CD14-positive monocyte (primary cell): ENCODE measurements at regions of chr17 and their contacts with region 1.

Region 1: GRCh38 chr17:27293898-27294688 is at the start of gene WSB1:
- DNase-seq: peak; percentile 92 to 95 (median 92)
- H3K4me3 ChIP-seq: peak within 1 kb of the TSS; percentile 68 to 98 (median 95)
- H3K4me3 Mint-ChIP-seq: peak within 1 kb of the TSS; percentile 99 to 100
- H3K27ac ChIP-seq: peak within 1 kb of the TSS; percentile 98 to 99
- H3K27ac Mint-ChIP-seq: peak within 1 kb of the TSS; percentile 98 to 100 (median 100)
- H3K4me1 ChIP-seq: peaks cover 44 to 49% of the 10 kb centered on the region in 2 donors
- H3K4me1 Mint-ChIP-seq: peaks cover 38% of the 10 kb centered on the region
- H3K27me3 ChIP-seq: no peaks in the 10 kb centered on the region
- H3K27me3 Mint-ChIP-seq: peaks cover 0 to 2% (median 0%) of the 10 kb centered on the region in 3 donors
- CTCF ChIP-seq: no peak
- polyA plus RNA-seq, gene WSB1: 220 to 368 (median 296) TPM

Region 2: GRCh38 chr17:27282054-27282551 is 12.0 kb before region 1 on chr17:
- intact Hi-C with region 1: loop called in 1 of 2 experiments (anchors 2 kb)
- DNase-seq: peak; percentile 58 to 88 (median 84)
- H3K4me3 ChIP-seq: peak overlapping the region in 1 of 3 experiments; percentile 63
- H3K4me3 Mint-ChIP-seq: peak overlapping the region; percentile 66 to 68
- H3K27ac ChIP-seq: peak overlapping the region; percentile 76 to 87
- H3K27ac Mint-ChIP-seq: peak overlapping the region; percentile 94 to 99 (median 98)
- H3K4me1 ChIP-seq: peaks cover 76 to 80% of the 10 kb centered on the region in 2 donors
- H3K4me1 Mint-ChIP-seq: peaks cover 72% of the 10 kb centered on the region
- H3K27me3 ChIP-seq: no peaks in the 10 kb centered on the region
- H3K27me3 Mint-ChIP-seq: no peaks in the 10 kb centered on the region
- CTCF ChIP-seq: no peak

Region 3: DNA sequence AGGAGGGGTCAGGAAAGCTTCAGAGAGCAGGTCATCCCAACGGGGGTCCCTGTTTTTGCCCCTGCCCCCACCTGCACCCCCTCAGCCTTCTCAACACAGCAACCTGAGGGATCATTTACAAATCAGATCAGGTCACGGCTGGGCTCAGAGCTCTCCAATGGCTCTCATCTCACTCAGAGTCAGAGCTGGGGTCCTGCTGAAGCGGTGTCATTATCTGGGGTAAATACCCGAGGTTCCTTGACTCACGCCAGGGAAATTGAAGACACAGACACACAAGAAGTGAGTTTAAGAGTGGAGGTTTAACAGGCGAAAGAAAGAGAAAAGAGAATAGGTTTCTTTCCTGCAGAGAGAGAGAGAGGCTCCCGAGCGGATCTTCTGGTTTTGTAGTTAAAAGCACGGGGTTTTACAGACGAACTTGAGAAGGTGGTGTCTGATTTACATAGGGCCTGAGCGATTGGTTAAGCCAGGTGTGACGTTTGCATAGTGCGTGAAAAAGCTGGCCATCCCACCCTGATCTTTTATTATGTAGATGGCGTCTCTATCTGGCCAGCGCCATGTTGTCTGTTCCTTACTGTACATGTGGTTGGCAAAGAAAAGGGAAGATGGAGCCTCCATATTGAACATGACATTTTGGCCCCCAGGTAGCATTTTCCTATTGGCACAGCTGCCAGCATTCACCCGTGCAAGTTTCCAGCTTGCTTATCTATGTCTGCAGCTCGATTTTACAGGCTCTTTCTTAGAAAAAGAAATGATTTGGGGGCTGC is 51.2 kb after region 1 on chr17:
- intact Hi-C with region 1: no loop called
- DNase-seq: no peak
- H3K4me3 ChIP-seq: no peak overlapping the region
- H3K4me3 Mint-ChIP-seq: no peak overlapping the region
- H3K27ac ChIP-seq: no peak overlapping the region
- H3K27ac Mint-ChIP-seq: no peak overlapping the region
- H3K4me1 ChIP-seq: peaks cover 43 to 51% of the 10 kb centered on the region in 2 donors
- H3K4me1 Mint-ChIP-seq: peaks cover 46% of the 10 kb centered on the region
- H3K27me3 ChIP-seq: no peaks in the 10 kb centered on the region
- H3K27me3 Mint-ChIP-seq: peaks cover 0 to 3% (median 0%) of the 10 kb centered on the region in 3 donors
- CTCF ChIP-seq: no peak